ENCODE measurements at regions of chr1 and their contacts with region 1.

Region 1: GRCh38 chr1:43763497-43763973 is 56.2 kb downstream of the ST3GAL3 start:
- DNase-seq: peak; percentile 72
- ATAC-seq: peak; percentile 87
- H3K4me3 ChIP-seq: no peak overlapping the region
- H3K27ac ChIP-seq: no peak overlapping the region
- H3K4me1 ChIP-seq: peaks cover 18% of the 10 kb centered on the region
- H3K27me3 ChIP-seq: no peaks in the 10 kb centered on the region
- CTCF ChIP-seq: peak; percentile 83 to 98 (median 92)
- EP300 ChIP-seq: no peak
- POLR2A ChIP-seq: no peak
- RAD21 ChIP-seq: peak; percentile 99

Region 2: DNA sequence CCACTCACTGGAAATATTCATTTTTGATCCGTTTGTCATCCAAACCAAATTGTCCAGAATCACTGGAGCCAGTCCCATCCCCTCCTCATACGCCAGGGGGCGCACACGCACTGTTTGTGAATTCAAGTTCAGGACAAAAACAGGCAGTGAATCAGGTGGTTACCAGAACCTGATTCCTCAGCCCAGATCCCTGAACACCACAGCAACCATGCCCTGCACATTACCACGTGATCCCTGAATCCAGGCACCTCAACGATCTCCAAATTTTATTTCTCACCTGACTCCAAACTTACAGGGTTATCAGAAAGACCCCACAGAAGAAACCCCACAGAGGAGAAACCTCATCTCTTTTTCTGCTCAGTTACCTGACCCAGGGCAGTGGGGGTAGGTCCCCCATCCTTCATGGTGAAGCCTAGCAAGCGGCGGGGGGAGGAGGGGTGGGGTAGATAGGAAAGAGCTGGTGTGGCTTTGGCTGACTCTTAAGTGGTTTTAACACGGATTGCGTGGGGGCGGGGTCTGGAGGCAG is 234.3 kb before region 1 on chr1:
- CTCF ChIA-PET with region 1: interaction called, 16 read pairs
- POLR2A ChIA-PET with region 1: no interaction called
- RAD21 ChIA-PET with region 1: interaction called, 11 read pairs
- SMC1A ChIA-PET with region 1: interaction called, 4 read pairs
- in situ Hi-C with region 1: no loop called
- intact Hi-C with region 1: loop called (anchors 5 kb)
- DNase-seq: peak; percentile 30
- ATAC-seq: peak; percentile 91
- H3K4me3 ChIP-seq: no peak overlapping the region
- H3K27ac ChIP-seq: no peak overlapping the region
- H3K4me1 ChIP-seq: no peaks in the 10 kb centered on the region
- H3K27me3 ChIP-seq: peaks cover 7 to 11% of the 10 kb centered on the region in 2 experiments
- CTCF ChIP-seq: peak; percentile 91 to 95 (median 95); a peak in 5 of 6 replicates
- EP300 ChIP-seq: no peak
- POLR2A ChIP-seq: no peak
- RAD21 ChIP-seq: peak; percentile 92

Region 3: GRCh38 chr1:43783671-43784205 is 20.2 kb after region 1 on chr1:
- CTCF ChIA-PET with region 1: interaction called, 22 read pairs
- POLR2A ChIA-PET with region 1: interaction called, 4 read pairs
- RAD21 ChIA-PET with region 1: interaction called, 23 read pairs
- SMC1A ChIA-PET with region 1: interaction called, 51 read pairs
- in situ Hi-C with region 1: no loop called
- intact Hi-C with region 1: no loop called
- DNase-seq: peak; percentile 84
- ATAC-seq: peak; percentile 87
- H3K4me3 ChIP-seq: no peak overlapping the region
- H3K27ac ChIP-seq: peak overlapping the region; percentile 88
- H3K4me1 ChIP-seq: peaks cover 19% of the 10 kb centered on the region
- H3K27me3 ChIP-seq: no peaks in the 10 kb centered on the region
- CTCF ChIP-seq: no peak
- EP300 ChIP-seq: peak in 1 of 2 experiments; percentile 59; a peak in 2 of 4 replicates
- POLR2A ChIP-seq: no peak
- RAD21 ChIP-seq: no peak

Region 4: GRCh38 chr1:43853161-43853921 is 89.8 kb after region 1 on chr1:
- CTCF ChIA-PET with region 1: interaction called, 29 read pairs
- POLR2A ChIA-PET with region 1: interaction called, 5 read pairs
- RAD21 ChIA-PET with region 1: interaction called, 24 read pairs
- SMC1A ChIA-PET with region 1: interaction called, 19 read pairs
- in situ Hi-C with region 1: no loop called
- intact Hi-C with region 1: no loop called
- DNase-seq: peak; percentile 87
- ATAC-seq: peak; percentile 92
- H3K4me3 ChIP-seq: peak overlapping the region; percentile 26; the same call in 1 of the 2 replicates
- H3K27ac ChIP-seq: peak overlapping the region; percentile 67
- H3K4me1 ChIP-seq: peaks cover 13% of the 10 kb centered on the region
- H3K27me3 ChIP-seq: no peaks in the 10 kb centered on the region
- CTCF ChIP-seq: no peak
- EP300 ChIP-seq: no peak
- POLR2A ChIP-seq: no peak
- RAD21 ChIP-seq: no peak

Region 5: GRCh38 chr1:43912607-43913006 is 149.1 kb after region 1 on chr1:
- CTCF ChIA-PET with region 1: interaction called, 81 read pairs
- POLR2A ChIA-PET with region 1: no interaction called
- RAD21 ChIA-PET with region 1: interaction called, 73 read pairs
- SMC1A ChIA-PET with region 1: interaction called, 74 read pairs
- in situ Hi-C with region 1: no loop called
- intact Hi-C with region 1: no loop called
- DNase-seq: no peak
- ATAC-seq: no peak
- H3K4me3 ChIP-seq: no peak overlapping the region
- H3K27ac ChIP-seq: no peak overlapping the region
- H3K4me1 ChIP-seq: no peaks in the 10 kb centered on the region
- H3K27me3 ChIP-seq: no peaks in the 10 kb centered on the region
- CTCF ChIP-seq: no peak
- EP300 ChIP-seq: no peak
- POLR2A ChIP-seq: no peak
- RAD21 ChIP-seq: no peak

Region 6: DNA sequence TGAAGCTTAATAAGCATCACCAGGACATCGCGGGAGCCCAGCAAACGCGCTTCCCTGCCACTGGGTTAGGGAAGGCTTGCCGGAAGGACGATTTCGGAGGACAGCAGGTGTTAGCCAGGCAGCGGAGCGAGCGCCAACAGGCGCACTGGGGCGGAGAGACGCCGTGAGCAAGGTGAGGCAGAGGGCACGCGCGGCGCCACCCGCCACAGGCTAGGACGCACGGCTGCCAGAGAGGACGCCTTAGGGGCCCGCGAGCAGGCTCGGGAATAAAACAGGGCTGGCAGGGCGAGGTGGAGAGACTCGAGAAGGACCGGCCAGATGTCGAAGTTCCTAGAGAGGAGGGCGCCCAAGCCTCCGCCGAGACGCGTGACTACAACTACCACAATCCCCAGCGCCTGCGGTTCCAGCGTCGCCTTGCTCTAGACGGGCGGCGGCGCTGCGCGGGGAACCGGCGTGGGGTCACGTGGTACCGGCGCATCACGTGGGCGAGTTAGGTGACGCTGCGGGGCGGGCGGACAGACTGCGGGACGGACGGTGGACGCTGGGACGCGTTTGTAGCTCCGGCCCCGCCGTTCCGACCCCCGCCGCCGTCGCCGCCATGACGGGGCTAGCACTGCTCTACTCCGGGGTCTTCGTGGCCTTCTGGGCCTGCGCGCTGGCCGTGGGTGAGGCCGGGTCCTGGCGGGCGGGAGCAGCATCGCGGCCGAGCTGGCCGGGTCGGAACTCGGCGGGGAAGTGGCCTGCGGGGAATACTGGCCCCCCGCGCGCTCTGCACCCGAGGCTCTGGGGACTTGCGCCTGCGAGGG is 211.1 kb after region 1 on chr1 and contains the start of gene ATP6V0B:
- CTCF ChIA-PET with region 1: no interaction called
- POLR2A ChIA-PET with region 1: interaction called, 3 read pairs
- RAD21 ChIA-PET with region 1: interaction called, 10 read pairs
- SMC1A ChIA-PET with region 1: no interaction called
- in situ Hi-C with region 1: no loop called
- intact Hi-C with region 1: no loop called
- DNase-seq: peak; percentile 59
- ATAC-seq: peak; percentile 80
- H3K4me3 ChIP-seq: peak within 1 kb of the TSS; percentile 95
- H3K27ac ChIP-seq: peak within 1 kb of the TSS; percentile 73
- H3K4me1 ChIP-seq: peaks cover 31% of the 10 kb centered on the region
- H3K27me3 ChIP-seq: no peaks in the 10 kb centered on the region
- CTCF ChIP-seq: peak in 2 of 3 experiments; percentile 1 to 6; a peak in 1 of 6 replicates
- EP300 ChIP-seq: no peak
- POLR2A ChIP-seq: peak; percentile 92
- RAD21 ChIP-seq: no peak
- polyA plus RNA-seq, gene ATP6V0B: 65.3 to 157 TPM

Region 7: GRCh38 chr1:44036409-44037139 is 273.0 kb after region 1 on chr1:
- CTCF ChIA-PET with region 1: interaction called, 35 read pairs
- POLR2A ChIA-PET with region 1: interaction called, 3 read pairs
- RAD21 ChIA-PET with region 1: interaction called, 8 read pairs
- SMC1A ChIA-PET with region 1: interaction called, 16 read pairs
- in situ Hi-C with region 1: loop called (anchors 10 kb)
- intact Hi-C with region 1: loop called (anchors 1 kb)
- DNase-seq: no peak
- ATAC-seq: peak; percentile 92
- H3K4me3 ChIP-seq: no peak overlapping the region
- H3K27ac ChIP-seq: no peak overlapping the region
- H3K4me1 ChIP-seq: peaks cover 9% of the 10 kb centered on the region; the same call in 1 of the 2 replicates
- H3K27me3 ChIP-seq: no peaks in the 10 kb centered on the region
- CTCF ChIP-seq: peak; percentile 91 to 96 (median 95)
- EP300 ChIP-seq: no peak
- POLR2A ChIP-seq: no peak
- RAD21 ChIP-seq: peak; percentile 83

Measured in GM12878 (cell line).